Posterior vena cava (tissue), 2 donors: ENCODE measurements at regions of chr11 and their contacts with region 1.

Region 1: DNA sequence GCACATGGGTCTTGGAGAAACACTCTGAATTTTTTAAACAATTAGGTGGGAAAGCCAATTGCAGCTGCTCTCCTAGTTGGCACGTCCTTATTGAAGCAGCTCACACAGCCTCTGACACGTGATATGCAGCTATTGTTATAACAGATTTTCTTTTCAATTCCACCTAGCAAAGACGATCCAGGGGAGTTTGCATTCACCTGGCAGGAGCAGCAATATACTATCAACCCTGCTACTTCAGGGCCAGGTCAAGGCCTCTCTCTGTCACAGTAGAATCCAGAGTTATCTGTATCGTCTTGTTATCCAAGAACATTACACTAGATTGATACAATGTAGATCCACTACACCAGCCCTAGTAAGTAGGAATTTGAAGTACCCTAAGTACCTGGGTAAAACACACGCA is 8.3 kb downstream of the KRTAP5-11 start:
- DNase-seq: no peak

Region 2: DNA sequence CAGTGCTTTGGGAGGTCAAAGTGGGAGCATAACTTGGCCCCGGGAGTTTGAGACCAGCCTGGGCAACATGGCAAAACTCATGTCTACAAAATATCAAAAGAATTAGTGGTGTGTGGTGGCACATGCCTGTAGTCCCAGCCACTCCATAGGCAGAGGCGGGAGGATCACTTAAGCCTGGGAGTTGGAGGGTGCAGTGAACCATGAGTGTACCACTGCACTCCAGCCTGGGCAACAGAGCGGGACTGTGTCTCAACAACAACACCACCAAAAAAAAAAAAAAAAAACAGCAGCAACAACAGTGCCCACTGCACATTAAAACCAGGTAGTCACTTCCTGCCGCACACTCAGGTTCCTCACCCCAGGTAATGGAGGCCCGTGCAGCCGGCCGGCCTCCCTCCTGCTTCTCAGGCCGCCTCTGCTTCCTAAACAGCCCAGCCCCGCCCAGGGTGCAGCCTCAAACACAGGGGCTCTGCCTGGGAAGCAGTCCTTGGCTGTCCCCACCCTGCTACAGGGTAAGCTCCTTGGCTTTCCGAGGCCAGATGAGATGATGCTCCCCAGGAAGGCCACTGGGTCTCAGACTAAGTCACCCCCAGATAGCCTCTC is 640.3 kb before region 1 on chr11:
- intact Hi-C with region 1: loop called in 1 of 2 experiments (anchors 5 kb)
- DNase-seq: no peak

Region 3: GRCh38 chr11:71454470-71455469 is 119.6 kb before region 1 on chr11:
- intact Hi-C with region 1: no loop called
- DNase-seq: peak; percentile 19